Heart left ventricle (tissue), 16 donors: ENCODE measurements at regions of chr12 and their contacts with region 1.

Region 1: DNA sequence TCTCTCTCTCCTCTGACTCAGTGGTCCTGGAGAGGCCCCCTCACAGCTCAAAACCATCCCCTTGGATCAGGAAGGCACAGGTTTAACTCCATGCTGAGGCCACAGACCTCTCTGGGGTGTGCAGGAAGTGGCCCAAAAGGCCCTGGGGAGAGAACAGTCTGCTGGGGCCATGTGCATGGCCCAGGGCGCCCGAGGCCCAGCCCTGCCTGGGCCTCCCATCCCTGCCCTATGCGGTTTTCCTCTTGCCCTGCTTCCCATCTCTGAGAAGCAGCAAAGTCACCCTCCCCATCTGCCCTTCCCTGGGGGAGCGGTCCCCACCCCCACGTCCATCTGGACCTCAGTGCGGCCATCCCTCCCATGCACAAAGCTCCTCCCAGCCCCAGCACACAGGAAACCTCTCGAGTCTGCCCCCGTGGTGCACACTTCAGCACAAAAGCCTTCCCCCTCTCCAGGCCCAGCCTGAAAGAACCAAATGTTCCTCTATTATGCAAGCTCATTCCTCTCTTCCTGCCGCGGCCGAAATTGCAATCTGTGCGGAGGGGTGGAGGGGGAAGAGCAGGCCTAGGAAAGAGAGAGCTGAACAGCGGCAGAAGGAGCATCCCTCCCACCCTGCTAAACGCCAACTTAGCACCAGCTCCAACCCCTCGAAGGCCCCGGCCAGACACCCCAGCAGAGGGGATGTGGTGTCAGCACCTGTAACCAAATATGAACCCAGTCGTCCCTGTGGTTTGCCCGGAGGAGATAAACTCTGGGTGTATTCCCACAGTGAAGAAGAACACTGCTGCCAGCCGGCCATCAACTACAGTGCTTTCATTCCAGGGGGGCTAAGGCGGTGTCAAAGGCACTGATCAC is 108.5 kb downstream of the SCARB1 start:
- DNase-seq: peak; percentile 86 to 94 (median 91)
- ATAC-seq: peak; percentile 91 to 95 (median 94)
- H3K4me3 ChIP-seq: no peak overlapping the region
- H3K27ac ChIP-seq: peak overlapping the region; percentile 73 to 95 (median 86)
- H3K4me1 ChIP-seq: peaks cover 3 to 74% (median 35%) of the 10 kb centered on the region in 12 donors
- H3K27me3 ChIP-seq: no peaks in the 10 kb centered on the region
- CTCF ChIP-seq: no peak
- POLR2A ChIP-seq: peak in 1 of 2 donors; percentile 16

Region 2: DNA sequence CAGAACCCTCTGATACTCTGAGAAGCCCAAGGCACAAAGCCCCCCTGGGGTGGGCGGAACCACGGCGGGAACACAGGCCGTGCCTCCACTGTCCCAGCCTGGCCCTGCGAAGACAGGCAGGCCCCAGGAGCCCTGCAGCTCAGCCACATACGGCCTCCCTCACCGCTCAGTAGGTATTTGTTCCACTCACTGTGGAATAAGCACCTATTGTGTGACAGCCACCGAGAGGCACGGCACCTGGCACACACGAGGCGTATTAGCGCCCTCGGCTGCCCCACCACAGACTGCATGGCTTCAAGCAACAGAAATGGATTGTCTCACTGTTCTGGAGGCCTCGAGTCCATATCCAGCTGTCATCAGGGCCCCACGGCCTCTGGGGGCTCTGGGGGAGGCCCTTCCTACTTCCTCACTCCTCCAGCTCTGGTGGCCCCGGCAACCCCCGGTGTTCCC is 254.0 kb before region 1 on chr12:
- intact Hi-C with region 1: loop called in 1 of 10 experiments (anchors 5 kb)
- DNase-seq: peak in 1 of 5 donors; percentile 60
- ATAC-seq: no peak
- H3K4me3 ChIP-seq: no peak overlapping the region
- H3K27ac ChIP-seq: peak overlapping the region in 10 of 12 donors; percentile 4 to 67 (median 30)
- H3K4me1 ChIP-seq: peaks cover 24 to 94% (median 75%) of the 10 kb centered on the region in 12 donors
- H3K27me3 ChIP-seq: no peaks in the 10 kb centered on the region
- CTCF ChIP-seq: no peak
- POLR2A ChIP-seq: no peak

Region 3: GRCh38 chr12:124740691-124741137 is 14.5 kb before region 1 on chr12:
- intact Hi-C with region 1: no loop called
- DNase-seq: peak in 2 of 5 donors; percentile 53 to 58
- ATAC-seq: peak in 3 of 4 donors; percentile 14 to 52 (median 31)
- H3K4me3 ChIP-seq: no peak overlapping the region
- H3K27ac ChIP-seq: peak overlapping the region in 3 of 12 donors; percentile 33 to 91 (median 70)
- H3K4me1 ChIP-seq: peaks cover 0 to 33% (median 8%) of the 10 kb centered on the region in 12 donors
- H3K27me3 ChIP-seq: no peaks in the 10 kb centered on the region
- CTCF ChIP-seq: peak in 4 of 12 donors; percentile 11 to 29 (median 22)
- POLR2A ChIP-seq: no peak

Region 4: GRCh38 chr12:124852329-124852831 is 97.2 kb after region 1 on chr12:
- intact Hi-C with region 1: no loop called
- DNase-seq: peak in 4 of 5 donors; percentile 52 to 85 (median 68)
- ATAC-seq: peak; percentile 19 to 70 (median 48)
- H3K4me3 ChIP-seq: no peak overlapping the region
- H3K27ac ChIP-seq: peak overlapping the region in 2 of 12 donors; percentile 12 to 88
- H3K4me1 ChIP-seq: peaks cover 0 to 57% (median 31%) of the 10 kb centered on the region in 12 donors
- H3K27me3 ChIP-seq: no peaks in the 10 kb centered on the region
- CTCF ChIP-seq: no peak
- POLR2A ChIP-seq: no peak